ENCODE measurements at regions of chr17 and their contacts with region 1.

Region 1: GRCh38 chr17:64420143-64420971 is 28.6 kb upstream of the MILR1 start:
- DNase-seq: peak; percentile 34
- H3K4me3 Mint-ChIP-seq: no peak overlapping the region
- H3K27ac Mint-ChIP-seq: no peak overlapping the region
- H3K4me1 Mint-ChIP-seq: peaks cover 5% of the 10 kb centered on the region
- H3K27me3 Mint-ChIP-seq: peaks cover 5% of the 10 kb centered on the region

Region 2: DNA sequence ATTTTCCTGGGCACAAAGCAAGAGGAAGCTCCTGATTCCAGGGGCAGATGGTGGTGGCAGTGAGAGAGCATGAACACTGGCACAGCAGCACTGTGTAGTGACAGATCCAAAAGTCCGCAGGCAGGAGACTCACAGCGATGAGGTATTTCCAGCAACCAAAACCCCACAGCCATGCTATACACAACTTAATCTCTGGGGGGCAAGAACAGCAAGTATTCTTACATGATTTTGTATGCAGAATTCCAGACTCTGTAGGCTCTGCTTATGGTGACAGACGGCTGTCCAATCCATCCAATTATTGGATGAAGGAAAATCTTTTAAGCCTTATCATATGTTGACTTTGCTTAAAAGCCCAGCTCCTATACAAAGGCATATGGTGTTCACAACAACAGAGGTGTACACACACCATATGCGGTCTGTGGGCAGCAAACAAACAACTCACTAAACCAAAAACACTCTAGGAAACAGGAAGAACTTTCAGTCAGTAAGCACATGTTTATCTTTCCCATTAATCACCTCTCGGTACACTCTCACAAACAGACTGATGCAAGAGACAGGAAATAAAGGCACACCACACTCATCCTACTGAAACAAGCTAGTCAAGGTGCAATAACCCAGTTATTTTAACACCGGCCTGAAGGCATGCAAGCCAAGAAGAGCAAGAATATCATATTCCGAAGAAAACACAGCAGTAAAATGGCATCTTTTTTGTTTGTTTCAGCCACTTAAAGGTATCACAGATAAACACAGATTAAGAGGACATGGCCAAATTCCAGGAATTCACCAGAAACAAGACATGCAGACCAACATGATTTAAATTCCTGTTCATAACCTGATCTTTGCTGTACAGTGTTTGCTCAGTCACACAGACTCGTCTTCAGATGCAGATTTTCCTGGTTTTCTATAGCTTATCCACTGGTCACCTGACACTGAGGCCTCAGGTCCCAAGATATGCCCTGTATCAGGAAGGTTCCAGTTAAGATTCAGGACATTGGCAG is 338.3 kb before region 1 on chr17:
- CTCF ChIA-PET with region 1: no interaction called
- POLR2A ChIA-PET with region 1: no interaction called
- DNase-seq: peak; percentile 84
- H3K4me3 Mint-ChIP-seq: peak overlapping the region; percentile 54
- H3K27ac Mint-ChIP-seq: no peak overlapping the region
- H3K4me1 Mint-ChIP-seq: peaks cover 31% of the 10 kb centered on the region
- H3K27me3 Mint-ChIP-seq: no peaks in the 10 kb centered on the region

Region 3: DNA sequence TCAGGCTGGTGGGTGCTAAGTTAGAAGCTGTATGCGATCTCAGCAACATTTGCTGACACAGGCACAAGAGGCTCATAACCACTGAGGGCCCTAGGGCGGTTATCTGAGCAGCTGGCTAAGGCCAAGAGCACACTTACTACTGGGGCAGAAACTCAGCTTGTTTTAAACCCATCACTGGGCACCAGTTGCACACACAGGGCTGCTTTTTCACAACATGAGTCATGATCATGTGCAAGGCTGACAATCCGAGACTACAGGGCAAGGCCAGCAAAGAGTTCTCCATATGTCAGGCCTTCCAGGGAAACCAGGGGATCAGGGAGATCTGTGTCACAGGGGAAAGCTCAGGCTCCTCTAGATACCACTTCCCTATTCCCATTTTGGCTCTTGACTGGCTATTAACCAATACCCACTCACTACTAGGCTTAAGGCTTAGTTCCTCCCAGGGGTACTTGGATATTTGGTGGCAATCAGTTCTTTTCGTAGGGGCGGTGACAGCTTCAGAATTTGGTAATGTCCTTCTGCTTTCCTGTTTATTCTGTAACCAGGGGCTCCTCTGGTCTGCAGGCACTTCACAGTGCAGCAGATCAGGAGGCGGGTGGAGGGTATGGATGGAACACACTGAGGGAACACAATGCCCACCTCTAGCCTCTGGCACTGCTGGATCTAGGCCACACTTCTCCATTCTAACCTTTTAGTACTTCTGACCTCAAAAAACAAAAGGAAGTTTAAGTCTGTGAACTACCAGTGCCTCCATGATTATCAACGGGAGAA is 245.5 kb before region 1 on chr17:
- CTCF ChIA-PET with region 1: no interaction called
- POLR2A ChIA-PET with region 1: no interaction called
- DNase-seq: no peak
- H3K4me3 Mint-ChIP-seq: no peak overlapping the region
- H3K27ac Mint-ChIP-seq: no peak overlapping the region
- H3K4me1 Mint-ChIP-seq: no peaks in the 10 kb centered on the region
- H3K27me3 Mint-ChIP-seq: no peaks in the 10 kb centered on the region

Region 4: GRCh38 chr17:64297467-64298098 is 122.8 kb before region 1 on chr17:
- CTCF ChIA-PET with region 1: interaction called, 24 read pairs
- POLR2A ChIA-PET with region 1: no interaction called
- DNase-seq: no peak
- H3K4me3 Mint-ChIP-seq: no peak overlapping the region
- H3K27ac Mint-ChIP-seq: no peak overlapping the region
- H3K4me1 Mint-ChIP-seq: no peaks in the 10 kb centered on the region
- H3K27me3 Mint-ChIP-seq: no peaks in the 10 kb centered on the region

Region 5: DNA sequence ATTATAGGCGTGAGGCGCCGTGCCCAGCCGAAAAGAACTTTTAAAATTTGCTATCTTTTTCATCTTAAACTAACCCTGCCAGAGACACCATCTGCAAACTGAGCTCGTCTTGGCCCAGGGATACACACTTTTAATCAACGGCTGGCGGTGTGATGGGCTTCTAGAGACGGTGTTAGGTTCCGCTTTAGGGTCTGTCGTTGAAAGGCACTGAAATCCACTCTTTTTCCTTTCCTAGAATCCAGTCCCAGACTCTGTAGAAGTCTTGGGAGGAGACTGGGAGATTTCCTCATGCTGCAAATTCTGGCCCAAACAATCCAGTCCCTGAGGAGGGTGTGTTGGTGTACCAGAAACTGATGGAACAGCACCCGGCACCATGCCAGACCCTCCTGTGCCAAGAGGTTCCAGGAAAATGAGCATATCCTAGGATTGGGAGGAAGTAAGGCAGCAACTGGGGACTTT is 105.3 kb before region 1 on chr17:
- CTCF ChIA-PET with region 1: interaction called, 99 read pairs
- POLR2A ChIA-PET with region 1: no interaction called
- DNase-seq: no peak
- H3K4me3 Mint-ChIP-seq: no peak overlapping the region
- H3K27ac Mint-ChIP-seq: no peak overlapping the region
- H3K4me1 Mint-ChIP-seq: no peaks in the 10 kb centered on the region
- H3K27me3 Mint-ChIP-seq: peaks cover 9% of the 10 kb centered on the region

Region 6: DNA sequence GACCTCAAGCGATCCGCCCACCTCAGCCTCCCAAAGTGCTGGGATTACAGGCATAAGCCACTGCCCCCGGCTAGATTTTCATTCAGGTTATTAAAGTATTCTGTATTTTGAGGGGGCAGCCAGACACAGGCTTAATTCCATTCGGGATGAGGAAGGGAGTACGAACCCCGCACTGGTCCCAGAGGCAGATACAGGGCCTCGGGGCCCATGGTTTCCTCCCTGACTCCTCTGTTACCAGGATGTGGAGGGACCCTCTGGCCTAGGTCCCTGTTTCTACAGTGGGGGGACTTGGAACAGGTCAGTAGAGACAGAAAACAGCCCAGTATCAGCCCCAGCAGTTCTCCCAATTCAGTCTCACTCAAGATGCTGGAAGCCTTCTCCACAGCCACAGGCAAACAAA is 71.7 kb before region 1 on chr17:
- CTCF ChIA-PET with region 1: interaction called, 11 read pairs
- POLR2A ChIA-PET with region 1: no interaction called
- DNase-seq: no peak
- H3K4me3 Mint-ChIP-seq: no peak overlapping the region
- H3K27ac Mint-ChIP-seq: no peak overlapping the region
- H3K4me1 Mint-ChIP-seq: peaks cover 13% of the 10 kb centered on the region
- H3K27me3 Mint-ChIP-seq: peaks cover 10% of the 10 kb centered on the region

Region 7: DNA sequence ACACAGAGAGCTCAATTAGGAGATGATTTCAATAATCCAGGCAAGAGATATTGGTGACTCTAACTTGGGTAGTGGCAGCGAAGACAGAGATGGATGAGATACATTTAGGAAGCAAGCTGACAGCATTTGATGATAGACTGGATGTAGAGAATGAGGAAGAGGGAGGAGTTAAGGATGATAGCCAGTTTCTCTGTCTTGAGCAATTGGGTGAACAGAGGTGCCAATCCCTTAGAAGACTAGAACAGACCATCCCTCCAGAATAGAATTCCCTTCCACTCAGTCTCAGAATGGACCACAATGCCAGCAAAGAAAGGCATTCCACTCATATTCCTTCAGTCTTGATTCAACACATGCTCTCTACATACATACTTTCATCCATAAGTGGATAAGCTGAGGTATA is 59.3 kb after region 1 on chr17:
- CTCF ChIA-PET with region 1: interaction called, 33 read pairs
- POLR2A ChIA-PET with region 1: interaction called, 4 read pairs
- DNase-seq: no peak
- H3K4me3 Mint-ChIP-seq: no peak overlapping the region
- H3K27ac Mint-ChIP-seq: no peak overlapping the region
- H3K4me1 Mint-ChIP-seq: peaks cover 7% of the 10 kb centered on the region
- H3K27me3 Mint-ChIP-seq: no peaks in the 10 kb centered on the region

Region 8: GRCh38 chr17:64496786-64497564 is 76.6 kb after region 1 on chr17 and contains the start of gene POLG2:
- CTCF ChIA-PET with region 1: interaction called, 341 read pairs
- POLR2A ChIA-PET with region 1: interaction called, 38 read pairs
- DNase-seq: peak; percentile 96
- H3K4me3 Mint-ChIP-seq: peak within 1 kb of the TSS; percentile 99
- H3K27ac Mint-ChIP-seq: peak within 1 kb of the TSS; percentile 99
- H3K4me1 Mint-ChIP-seq: peaks cover 82% of the 10 kb centered on the region
- H3K27me3 Mint-ChIP-seq: no peaks in the 10 kb centered on the region
- total RNA-seq, gene POLG2: 34.7 to 35.2 TPM

Region 9: DNA sequence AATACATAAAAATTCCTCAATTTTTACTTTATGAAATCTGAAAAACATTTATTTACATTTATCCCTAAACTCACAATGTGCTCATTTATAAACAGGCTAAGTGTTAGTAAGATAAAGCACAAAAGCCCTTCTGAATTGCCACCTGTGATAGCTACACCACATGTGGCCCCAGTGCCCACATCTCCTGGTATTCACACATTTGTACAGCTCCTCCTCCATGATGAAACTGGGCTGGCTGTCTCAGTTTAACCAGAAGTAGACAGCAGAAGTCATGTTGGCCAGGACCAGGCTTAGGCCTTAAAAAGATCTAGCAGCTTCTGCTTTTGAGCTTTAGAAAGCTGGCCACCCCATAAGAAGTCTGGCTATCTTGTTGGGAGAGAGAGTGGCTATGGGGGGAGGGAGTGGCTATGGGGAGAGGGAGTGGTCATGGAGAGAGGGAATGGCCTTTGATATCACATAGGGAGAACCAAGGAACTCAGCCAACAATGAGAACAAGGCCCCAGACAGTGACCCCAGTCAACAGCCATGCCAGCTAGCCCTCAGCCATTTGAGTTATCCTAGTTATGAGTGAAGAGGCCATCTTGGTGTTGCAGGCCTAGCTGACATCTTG is 133.8 kb after region 1 on chr17:
- CTCF ChIA-PET with region 1: no interaction called
- POLR2A ChIA-PET with region 1: no interaction called
- DNase-seq: no peak
- H3K4me3 Mint-ChIP-seq: no peak overlapping the region
- H3K27ac Mint-ChIP-seq: no peak overlapping the region
- H3K4me1 Mint-ChIP-seq: no peaks in the 10 kb centered on the region
- H3K27me3 Mint-ChIP-seq: no peaks in the 10 kb centered on the region

Region 10: DNA sequence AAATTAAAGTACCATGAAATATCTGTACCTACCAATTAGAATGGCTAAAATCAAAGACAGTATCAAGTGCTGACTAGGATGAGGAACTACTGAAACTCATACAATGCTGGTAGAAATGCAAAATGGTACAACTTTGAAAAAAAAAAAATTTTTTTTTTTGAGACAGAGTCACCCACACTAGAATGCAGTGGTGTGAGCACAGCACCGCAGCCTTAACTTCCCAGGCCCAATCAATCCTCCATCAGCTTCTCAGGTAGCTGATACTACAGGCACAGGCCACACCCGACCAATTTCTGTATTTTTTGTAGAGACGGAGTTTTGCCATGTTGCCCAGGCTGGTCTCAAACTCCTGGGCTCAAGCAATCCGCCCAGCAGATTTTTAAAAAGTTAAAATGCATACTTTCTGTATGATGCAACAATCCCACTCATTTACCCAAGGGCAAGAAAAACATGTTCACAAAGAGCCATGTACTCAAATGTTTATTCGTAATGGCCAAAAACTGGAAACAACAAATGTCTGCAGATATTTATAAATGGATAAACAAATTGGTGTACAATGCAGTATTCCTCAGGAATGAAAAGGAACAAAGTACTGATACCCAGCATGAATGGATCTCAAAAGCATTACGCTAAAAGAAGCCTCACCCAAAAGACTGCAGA is 233.1 kb after region 1 on chr17:
- CTCF ChIA-PET with region 1: interaction called, 36 read pairs
- POLR2A ChIA-PET with region 1: no interaction called
- DNase-seq: no peak
- H3K4me3 Mint-ChIP-seq: no peak overlapping the region
- H3K27ac Mint-ChIP-seq: no peak overlapping the region
- H3K4me1 Mint-ChIP-seq: peaks cover 21% of the 10 kb centered on the region
- H3K27me3 Mint-ChIP-seq: no peaks in the 10 kb centered on the region